ENCODE measurements at regions of chr6 and their contacts with region 1.

Region 1: GRCh38 chr6:52995913-52996645 is 995 bp upstream of the GSTA4 start:
- DNase-seq: no peak
- ATAC-seq: no peak
- H3K4me3 ChIP-seq: peak overlapping the region in 2 of 3 donors; percentile 9 to 25
- H3K27ac ChIP-seq: peak overlapping the region in 1 of 3 donors; percentile 89
- H3K4me1 ChIP-seq: peaks cover 0 to 6% (median 2%) of the 10 kb centered on the region in 4 donors
- H3K27me3 ChIP-seq: no peaks in the 10 kb centered on the region
- CTCF ChIP-seq: no peak
- POLR2A ChIP-seq: no peak

Region 2: DNA sequence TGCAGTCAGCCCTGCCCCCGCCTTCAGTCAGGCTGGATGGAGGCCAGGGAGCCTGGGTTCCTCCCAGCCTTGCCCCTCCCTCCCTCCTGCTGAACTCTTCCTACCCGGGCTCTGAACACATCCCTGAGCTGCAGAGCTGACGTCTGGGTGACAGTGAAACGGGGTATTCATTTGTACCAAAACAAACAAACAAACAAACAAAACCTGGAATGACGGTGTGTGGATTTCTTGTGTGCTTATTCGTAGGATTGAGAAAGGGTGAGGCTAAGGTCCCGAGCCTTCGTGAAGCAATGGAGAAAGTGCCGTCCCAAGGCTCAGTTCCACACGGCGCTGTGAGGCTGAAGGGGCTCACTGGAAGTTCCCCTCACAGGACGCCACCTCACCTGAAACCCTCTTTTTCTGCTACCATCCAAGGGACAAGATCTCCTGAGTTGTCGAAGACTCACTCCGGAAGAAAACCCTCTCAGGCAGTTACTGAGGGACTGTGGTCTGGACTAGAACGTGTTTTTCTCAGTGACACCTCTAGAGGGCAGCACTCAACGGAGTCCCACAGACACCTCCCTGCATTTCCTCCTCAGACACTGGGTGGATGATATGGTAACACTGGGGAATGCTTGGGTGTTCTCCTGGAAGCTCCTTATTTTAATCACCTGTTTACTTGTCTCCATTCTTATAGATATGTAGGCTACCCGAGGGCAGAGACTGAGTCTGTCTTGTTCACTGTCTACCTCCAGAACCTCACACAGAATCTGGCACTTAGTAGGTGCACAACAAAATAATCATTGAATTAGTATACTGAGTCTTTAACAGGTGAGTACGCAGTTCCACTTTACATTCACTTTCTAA is 113.9 kb before region 1 on chr6:
- intact Hi-C with region 1: loop called in 1 of 2 experiments (anchors 10 kb)
- DNase-seq: peak; percentile 46 to 74 (median 66)
- ATAC-seq: peak; percentile 99 to 100 (median 100)
- H3K4me3 ChIP-seq: peak overlapping the region; percentile 43 to 63 (median 59)
- H3K27ac ChIP-seq: peak overlapping the region in 1 of 3 donors; percentile 67
- H3K4me1 ChIP-seq: no peaks in the 10 kb centered on the region
- H3K27me3 ChIP-seq: no peaks in the 10 kb centered on the region
- CTCF ChIP-seq: peak; percentile 77 to 91 (median 84)
- POLR2A ChIP-seq: no peak

Region 3: DNA sequence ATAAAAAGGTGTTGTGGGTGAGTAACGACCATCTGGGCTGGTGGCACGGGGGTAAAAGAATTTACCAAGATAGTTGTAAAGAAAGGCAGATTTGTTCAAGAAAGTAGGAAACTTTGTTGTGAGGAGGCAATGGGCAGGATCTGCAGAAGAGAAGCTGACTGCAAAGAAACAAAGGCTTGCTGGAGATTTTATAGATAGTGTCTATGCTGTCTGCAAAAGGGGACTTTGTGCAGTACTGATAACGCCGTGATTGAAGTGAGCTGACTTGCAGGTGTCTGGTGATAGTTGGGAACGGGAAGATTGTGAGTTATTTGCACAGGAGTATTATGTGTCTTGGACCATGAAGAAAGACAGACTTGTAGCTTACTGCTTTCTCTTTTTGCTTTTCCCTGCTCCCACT is 49.8 kb before region 1 on chr6:
- intact Hi-C with region 1: no loop called
- DNase-seq: no peak
- ATAC-seq: no peak
- H3K4me3 ChIP-seq: no peak overlapping the region
- H3K27ac ChIP-seq: no peak overlapping the region
- H3K4me1 ChIP-seq: no peaks in the 10 kb centered on the region
- H3K27me3 ChIP-seq: no peaks in the 10 kb centered on the region
- CTCF ChIP-seq: no peak
- POLR2A ChIP-seq: no peak

Region 4: GRCh38 chr6:53134601-53135235 is 138.6 kb after region 1 on chr6:
- intact Hi-C with region 1: no loop called
- DNase-seq: no peak
- ATAC-seq: no peak
- H3K4me3 ChIP-seq: no peak overlapping the region
- H3K27ac ChIP-seq: no peak overlapping the region
- H3K4me1 ChIP-seq: no peaks in the 10 kb centered on the region
- H3K27me3 ChIP-seq: no peaks in the 10 kb centered on the region
- CTCF ChIP-seq: no peak
- POLR2A ChIP-seq: no peak

Measured in right lobe of liver (tissue), 6 donors.